H1 (cell line): ENCODE measurements at regions of chr19 and their contacts with region 1.

Region 1: GRCh38 chr19:18233224-18233825 is 7.1 kb upstream of the PDE4C start:
- DNase-seq: peak in 1 of 2 experiments; percentile 95
- H3K4me3 ChIP-seq: peak overlapping the region; percentile 11 to 54 (median 32); a peak in 7 of 8 replicates
- H3K27ac ChIP-seq: no peak overlapping the region
- H3K4me1 ChIP-seq: peaks cover 6 to 20% (median 14%) of the 10 kb centered on the region in 4 experiments
- H3K27me3 ChIP-seq: no peaks in the 10 kb centered on the region
- CTCF ChIP-seq: no peak
- EP300 ChIP-seq: peak in 1 of 2 experiments; percentile 18; a peak in 1 of 3 replicates
- POLR2A ChIP-seq: no peak
- RAD21 ChIP-seq: no peak

Region 2: DNA sequence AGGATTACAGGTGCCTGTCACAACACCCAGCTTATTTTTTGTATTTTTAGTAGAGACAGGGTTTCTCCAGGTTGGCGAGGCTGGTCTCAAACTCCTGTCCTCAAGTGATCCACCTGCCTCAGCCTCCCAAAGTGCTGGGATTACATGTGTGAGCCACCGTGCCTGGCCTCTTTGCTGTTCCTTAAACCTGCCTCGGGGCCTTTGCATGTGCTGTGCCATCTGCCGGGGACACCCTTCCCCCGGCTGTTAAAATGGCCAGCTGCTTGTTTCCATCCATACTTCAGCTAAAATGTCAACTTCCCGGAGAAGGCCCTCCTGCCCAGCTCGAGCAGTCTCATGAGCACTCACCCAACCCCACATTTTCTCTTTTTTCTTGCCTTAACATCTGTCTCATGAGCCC is 12.0 kb after region 1 on chr19:
- CTCF ChIA-PET with region 1: interaction called, 140 read pairs
- POLR2A ChIA-PET with region 1: interaction called, 19 read pairs
- DNase-seq: no peak
- H3K4me3 ChIP-seq: no peak overlapping the region
- H3K27ac ChIP-seq: no peak overlapping the region
- H3K4me1 ChIP-seq: peaks cover 0 to 4% (median 0%) of the 10 kb centered on the region in 4 experiments; a peak in 1 of 7 replicates
- H3K27me3 ChIP-seq: no peaks in the 10 kb centered on the region
- CTCF ChIP-seq: no peak
- EP300 ChIP-seq: no peak
- POLR2A ChIP-seq: no peak
- RAD21 ChIP-seq: no peak

Region 3: DNA sequence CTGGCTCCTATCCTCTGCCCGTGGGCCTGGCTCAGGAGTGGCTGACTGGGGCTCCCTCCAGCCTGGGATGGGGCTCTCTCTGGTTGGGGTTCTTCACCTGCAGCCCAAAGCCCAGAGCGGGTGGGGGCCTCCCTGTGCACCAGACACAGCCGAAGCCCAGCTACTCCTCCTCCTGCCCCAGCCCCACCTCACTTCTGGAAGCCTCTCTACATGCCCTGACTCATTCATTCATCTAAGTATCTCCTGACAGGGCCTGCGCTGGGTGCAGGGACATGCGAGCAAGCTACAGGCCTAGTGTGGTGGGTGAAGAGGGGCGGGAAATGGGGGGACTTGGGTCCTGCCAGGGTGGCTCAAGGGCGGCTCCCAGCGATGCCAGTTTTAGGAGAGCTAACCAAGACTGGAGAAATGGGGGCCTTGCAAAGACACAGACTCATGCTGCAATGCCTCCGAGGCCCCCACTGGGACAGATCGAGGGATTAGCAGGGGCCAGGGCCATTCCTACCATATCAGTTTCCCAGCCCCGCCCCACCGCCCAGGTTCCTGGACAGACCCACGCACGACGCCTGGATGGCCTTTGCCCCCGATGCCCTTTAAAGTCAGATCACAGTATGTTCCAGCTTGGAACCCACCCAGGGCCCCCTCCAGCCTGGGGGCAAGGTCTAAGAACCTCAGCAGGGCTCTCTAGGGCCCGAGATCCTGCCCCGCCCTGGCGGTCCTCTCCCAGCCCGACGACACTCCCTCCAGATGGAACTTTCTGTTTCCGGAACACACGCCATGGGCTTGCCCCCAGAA is 77.0 kb after region 1 on chr19:
- CTCF ChIA-PET with region 1: no interaction called
- POLR2A ChIA-PET with region 1: no interaction called
- DNase-seq: no peak
- H3K4me3 ChIP-seq: no peak overlapping the region
- H3K27ac ChIP-seq: no peak overlapping the region
- H3K4me1 ChIP-seq: peaks cover 0 to 5% (median under 1%) of the 10 kb centered on the region in 4 experiments; a peak in 4 of 7 replicates
- H3K27me3 ChIP-seq: no peaks in the 10 kb centered on the region
- CTCF ChIP-seq: no peak
- EP300 ChIP-seq: no peak
- POLR2A ChIP-seq: no peak
- RAD21 ChIP-seq: no peak